ENCODE measurements at regions of chr10 and their contacts with region 1.

Region 1: GRCh38 chr10:37754538-37755323 is 102.7 kb downstream of the ZNF248 start:
- DNase-seq: peak in 1 of 6 donors; percentile 17
- ATAC-seq: peak in 3 of 4 donors; percentile 60 to 85 (median 70)
- H3K4me3 ChIP-seq: no peak overlapping the region
- H3K27ac ChIP-seq: no peak overlapping the region
- H3K4me1 ChIP-seq: no peaks in the 10 kb centered on the region
- H3K27me3 ChIP-seq: no peaks in the 10 kb centered on the region
- CTCF ChIP-seq: peak in 3 of 4 donors; percentile 16 to 23 (median 17)

Region 2: DNA sequence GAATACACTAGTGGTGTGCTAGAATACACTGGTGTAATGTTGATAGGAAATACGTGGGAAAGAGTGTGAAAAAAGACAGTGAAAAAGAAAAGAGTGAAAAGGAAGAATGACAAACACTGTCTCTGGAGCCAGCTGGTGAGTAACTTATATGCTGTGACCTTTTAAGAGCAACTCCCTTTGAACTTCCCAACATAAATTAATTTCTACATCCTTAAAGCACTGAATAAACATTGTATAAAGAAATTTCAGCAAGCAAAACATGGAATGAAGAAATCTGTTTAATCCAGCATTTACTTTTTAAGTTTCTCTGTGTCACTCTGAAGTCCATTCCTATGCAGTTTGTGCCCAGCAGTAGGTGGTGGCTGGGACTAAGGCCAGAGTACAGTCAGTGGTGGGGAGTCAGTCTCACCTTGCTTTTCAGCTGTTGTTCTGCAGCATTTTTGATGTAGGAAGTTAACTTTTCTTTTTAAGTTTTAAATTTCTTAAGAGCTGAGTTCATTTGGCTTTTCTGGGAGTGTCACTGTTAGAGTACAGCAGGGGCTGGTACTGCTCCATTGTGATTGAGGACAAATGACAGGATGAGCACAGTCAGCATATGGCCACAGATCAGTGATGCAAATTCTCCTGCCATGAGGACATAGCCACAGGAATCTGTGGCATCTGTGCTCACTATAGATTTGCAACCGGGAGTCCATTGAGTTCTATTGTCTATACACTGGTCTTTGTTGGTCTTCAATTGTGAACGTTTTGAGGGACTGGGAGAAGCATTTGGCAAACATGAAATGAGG is 219.1 kb before region 1 on chr10:
- intact Hi-C with region 1: loop called in 1 of 3 experiments (anchors 10 kb)
- DNase-seq: no peak
- ATAC-seq: no peak
- H3K4me3 ChIP-seq: no peak overlapping the region
- H3K27ac ChIP-seq: no peak overlapping the region
- H3K4me1 ChIP-seq: no peaks in the 10 kb centered on the region
- H3K27me3 ChIP-seq: no peaks in the 10 kb centered on the region
- CTCF ChIP-seq: no peak